ENCODE measurements at regions of chr22 and their contacts with region 1.

Region 1: GRCh38 chr22:36856121-36856791 is 4.5 kb upstream of the NCF4 start:
- DNase-seq: peak; percentile 85 to 90 (median 86)
- H3K4me3 ChIP-seq: no peak overlapping the region
- H3K4me3 Mint-ChIP-seq: peak overlapping the region in 6 of 8 donors; percentile 58 to 80 (median 68)
- H3K27ac ChIP-seq: no peak overlapping the region
- H3K27ac Mint-ChIP-seq: peak overlapping the region in 6 of 7 donors; percentile 44 to 92 (median 73)
- H3K4me1 ChIP-seq: peaks cover 31% of the 10 kb centered on the region
- H3K4me1 Mint-ChIP-seq: peaks cover 16 to 39% (median 28%) of the 10 kb centered on the region in 4 donors
- H3K27me3 ChIP-seq: no peaks in the 10 kb centered on the region
- H3K27me3 Mint-ChIP-seq: peaks cover 2 to 4% of the 10 kb centered on the region in 2 donors

Region 2: GRCh38 chr22:36757668-36758211 is 98.5 kb before region 1 on chr22:
- CTCF ChIA-PET with region 1: interaction called, 7 read pairs
- POLR2A ChIA-PET with region 1: no interaction called
- intact Hi-C with region 1: loop called (anchors 1 kb)
- DNase-seq: peak; percentile 56 to 71 (median 64)
- H3K4me3 ChIP-seq: no peak overlapping the region
- H3K4me3 Mint-ChIP-seq: no peak overlapping the region
- H3K27ac ChIP-seq: no peak overlapping the region
- H3K27ac Mint-ChIP-seq: no peak overlapping the region
- H3K4me1 ChIP-seq: peaks cover 5% of the 10 kb centered on the region
- H3K4me1 Mint-ChIP-seq: peaks cover 2 to 13% (median 5%) of the 10 kb centered on the region in 4 donors
- H3K27me3 ChIP-seq: peaks cover 4% of the 10 kb centered on the region
- H3K27me3 Mint-ChIP-seq: peaks cover 6 to 8% of the 10 kb centered on the region in 2 donors

Region 3: GRCh38 chr22:36781656-36782627 is 74.3 kb before region 1 on chr22:
- CTCF ChIA-PET with region 1: interaction called, 32 read pairs
- POLR2A ChIA-PET with region 1: interaction called, 13 read pairs
- intact Hi-C with region 1: loop called (anchors 1 kb)
- DNase-seq: peak; percentile 80 to 86 (median 82)
- H3K4me3 ChIP-seq: no peak overlapping the region
- H3K4me3 Mint-ChIP-seq: peak overlapping the region in 2 of 8 donors; percentile 46 to 75
- H3K27ac ChIP-seq: no peak overlapping the region
- H3K27ac Mint-ChIP-seq: peak overlapping the region; percentile 14 to 86 (median 67)
- H3K4me1 ChIP-seq: peaks cover 12% of the 10 kb centered on the region
- H3K4me1 Mint-ChIP-seq: peaks cover 6 to 24% (median 17%) of the 10 kb centered on the region in 4 donors
- H3K27me3 ChIP-seq: peaks cover 5% of the 10 kb centered on the region
- H3K27me3 Mint-ChIP-seq: peaks cover 3 to 4% of the 10 kb centered on the region in 2 donors

Region 4: GRCh38 chr22:36829370-36830002 is 26.8 kb before region 1 on chr22:
- CTCF ChIA-PET with region 1: interaction called, 14 read pairs
- POLR2A ChIA-PET with region 1: no interaction called
- intact Hi-C with region 1: no loop called
- DNase-seq: no peak
- H3K4me3 ChIP-seq: no peak overlapping the region
- H3K4me3 Mint-ChIP-seq: peak overlapping the region in 2 of 8 donors; percentile 8 to 14
- H3K27ac ChIP-seq: no peak overlapping the region
- H3K27ac Mint-ChIP-seq: peak overlapping the region in 1 of 7 donors; percentile 6
- H3K4me1 ChIP-seq: peaks cover 23% of the 10 kb centered on the region
- H3K4me1 Mint-ChIP-seq: peaks cover 20 to 33% (median 28%) of the 10 kb centered on the region in 4 donors
- H3K27me3 ChIP-seq: peaks cover 7% of the 10 kb centered on the region
- H3K27me3 Mint-ChIP-seq: peaks cover 14 to 15% of the 10 kb centered on the region in 2 donors

Region 5: GRCh38 chr22:36873680-36874537 is 17.7 kb after region 1 on chr22:
- CTCF ChIA-PET with region 1: interaction called, 37 read pairs
- POLR2A ChIA-PET with region 1: interaction called, 8 read pairs
- intact Hi-C with region 1: no loop called
- DNase-seq: peak in 2 of 5 donors; percentile 25 to 34
- H3K4me3 ChIP-seq: no peak overlapping the region
- H3K4me3 Mint-ChIP-seq: peak overlapping the region in 7 of 8 donors; percentile 23 to 54 (median 42)
- H3K27ac ChIP-seq: peak overlapping the region; percentile 27
- H3K27ac Mint-ChIP-seq: peak overlapping the region; percentile 81 to 91 (median 87)
- H3K4me1 ChIP-seq: peaks cover 19% of the 10 kb centered on the region
- H3K4me1 Mint-ChIP-seq: peaks cover 10 to 15% (median 13%) of the 10 kb centered on the region in 4 donors
- H3K27me3 ChIP-seq: no peaks in the 10 kb centered on the region
- H3K27me3 Mint-ChIP-seq: no peaks in the 10 kb centered on the region

Region 6: GRCh38 chr22:36977947-36978660 is 121.8 kb after region 1 on chr22:
- CTCF ChIA-PET with region 1: interaction called, 112 read pairs
- POLR2A ChIA-PET with region 1: interaction called, 17 read pairs
- intact Hi-C with region 1: loop called (anchors 1 kb)
- DNase-seq: peak; percentile 86 to 89 (median 88)
- H3K4me3 ChIP-seq: peak overlapping the region; percentile 41 to 67
- H3K4me3 Mint-ChIP-seq: peak overlapping the region; percentile 88 to 98 (median 96)
- H3K27ac ChIP-seq: peak overlapping the region; percentile 59
- H3K27ac Mint-ChIP-seq: peak overlapping the region; percentile 82 to 99 (median 96)
- H3K4me1 ChIP-seq: peaks cover 4% of the 10 kb centered on the region
- H3K4me1 Mint-ChIP-seq: peaks cover 3 to 14% (median 8%) of the 10 kb centered on the region in 4 donors
- H3K27me3 ChIP-seq: no peaks in the 10 kb centered on the region
- H3K27me3 Mint-ChIP-seq: peaks cover 3 to 5% of the 10 kb centered on the region in 2 donors